ENCODE measurements at regions of chr5 and their contacts with region 1.

Region 1: DNA sequence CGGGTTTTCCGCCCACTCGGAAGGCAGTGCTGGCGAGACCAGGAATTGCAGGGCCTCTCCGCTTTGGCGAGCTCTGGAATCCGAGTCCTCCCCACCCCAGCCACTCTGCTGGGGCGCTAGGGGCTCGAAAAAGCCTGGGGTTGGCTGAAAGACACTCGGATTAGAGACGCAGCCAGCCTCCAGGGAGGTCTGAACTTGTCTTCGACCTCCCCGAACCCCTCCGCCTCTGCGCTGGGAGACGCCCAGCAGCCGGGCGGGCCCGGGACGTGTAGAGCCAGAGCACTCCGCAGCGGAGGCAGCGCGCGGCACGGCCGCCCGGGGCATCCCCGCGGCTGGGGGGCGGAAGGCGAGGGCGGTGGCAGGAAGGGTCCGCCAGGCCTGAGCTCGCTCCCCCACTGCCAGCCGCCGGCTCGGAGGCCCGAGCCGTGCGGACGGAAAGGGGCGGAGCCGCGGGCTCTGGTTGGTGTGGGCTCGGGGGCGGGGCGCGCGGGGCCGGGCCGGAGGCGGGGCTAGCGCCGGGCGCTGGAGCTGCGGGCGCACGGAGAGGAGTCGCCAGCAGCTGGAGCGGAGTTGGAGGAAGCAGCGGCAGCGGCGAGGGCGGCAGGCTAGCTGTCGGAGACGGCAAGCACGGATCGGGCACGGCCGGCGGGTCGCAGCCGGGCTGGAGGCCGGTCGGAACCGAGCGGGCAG is at the start of gene PIK3R1:
- DNase-seq: peak; percentile 97
- H3K4me3 ChIP-seq: peak within 1 kb of the TSS; percentile 90 to 98 (median 92)
- H3K27ac ChIP-seq: peak within 1 kb of the TSS; percentile 94 to 99 (median 96)
- H3K4me1 ChIP-seq: peaks cover 0 to 31% (median 27%) of the 10 kb centered on the region in 4 donors
- H3K27me3 ChIP-seq: no peaks in the 10 kb centered on the region
- CTCF ChIP-seq: peak in 3 of 4 experiments; percentile 50 to 60 (median 51)
- EP300 ChIP-seq: no peak
- POLR2A ChIP-seq: peak; percentile 56 to 59
- total RNA-seq, gene PIK3R1: 177 to 227 (median 190) TPM

Region 2: DNA sequence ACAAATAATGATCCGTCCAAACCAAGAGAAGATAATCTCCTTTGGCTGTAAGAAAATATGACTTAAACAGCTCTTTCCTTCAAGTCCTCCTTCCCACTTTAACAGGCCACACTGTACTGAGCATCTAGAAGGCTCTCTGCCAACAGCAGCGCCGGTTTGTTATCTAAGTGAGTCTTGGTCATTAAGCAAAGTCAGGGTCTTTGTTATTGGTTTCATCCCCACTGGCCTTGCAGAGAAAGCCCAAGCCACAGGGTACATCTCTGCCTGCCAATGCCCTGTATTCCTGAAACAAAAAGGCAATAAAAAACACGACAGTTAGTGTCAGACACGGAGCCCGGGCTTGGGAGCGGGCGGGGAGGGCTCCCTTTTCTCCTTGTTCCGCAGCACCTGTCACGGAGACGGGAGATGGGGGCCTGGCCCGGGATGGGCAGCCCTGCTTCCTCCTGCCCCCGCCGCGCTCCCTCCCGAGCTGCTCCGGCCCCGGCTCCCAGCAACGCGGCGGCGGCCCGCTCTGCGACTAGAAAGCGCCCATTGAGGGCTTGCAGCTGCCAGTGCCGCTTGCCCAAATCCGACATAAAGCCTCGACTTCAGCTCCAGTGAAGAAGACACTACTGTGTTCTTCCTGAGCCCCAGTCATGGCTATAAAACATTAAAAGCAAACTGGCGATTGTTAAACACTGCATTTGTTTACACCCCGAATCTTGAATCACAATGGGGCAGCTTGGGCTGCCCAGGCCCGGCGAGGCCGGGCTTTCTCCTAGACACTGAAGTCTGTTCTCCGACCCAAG is 27.9 kb before region 1 on chr5:
- intact Hi-C with region 1: loop called (anchors 2 kb)
- DNase-seq: peak; percentile 85
- H3K4me3 ChIP-seq: peak overlapping the region; percentile 5 to 39 (median 38)
- H3K27ac ChIP-seq: peak overlapping the region; percentile 75 to 84 (median 82)
- H3K4me1 ChIP-seq: peaks cover 0 to 15% (median 14%) of the 10 kb centered on the region in 4 donors
- H3K27me3 ChIP-seq: no peaks in the 10 kb centered on the region
- CTCF ChIP-seq: no peak
- EP300 ChIP-seq: no peak
- POLR2A ChIP-seq: no peak

Region 3: DNA sequence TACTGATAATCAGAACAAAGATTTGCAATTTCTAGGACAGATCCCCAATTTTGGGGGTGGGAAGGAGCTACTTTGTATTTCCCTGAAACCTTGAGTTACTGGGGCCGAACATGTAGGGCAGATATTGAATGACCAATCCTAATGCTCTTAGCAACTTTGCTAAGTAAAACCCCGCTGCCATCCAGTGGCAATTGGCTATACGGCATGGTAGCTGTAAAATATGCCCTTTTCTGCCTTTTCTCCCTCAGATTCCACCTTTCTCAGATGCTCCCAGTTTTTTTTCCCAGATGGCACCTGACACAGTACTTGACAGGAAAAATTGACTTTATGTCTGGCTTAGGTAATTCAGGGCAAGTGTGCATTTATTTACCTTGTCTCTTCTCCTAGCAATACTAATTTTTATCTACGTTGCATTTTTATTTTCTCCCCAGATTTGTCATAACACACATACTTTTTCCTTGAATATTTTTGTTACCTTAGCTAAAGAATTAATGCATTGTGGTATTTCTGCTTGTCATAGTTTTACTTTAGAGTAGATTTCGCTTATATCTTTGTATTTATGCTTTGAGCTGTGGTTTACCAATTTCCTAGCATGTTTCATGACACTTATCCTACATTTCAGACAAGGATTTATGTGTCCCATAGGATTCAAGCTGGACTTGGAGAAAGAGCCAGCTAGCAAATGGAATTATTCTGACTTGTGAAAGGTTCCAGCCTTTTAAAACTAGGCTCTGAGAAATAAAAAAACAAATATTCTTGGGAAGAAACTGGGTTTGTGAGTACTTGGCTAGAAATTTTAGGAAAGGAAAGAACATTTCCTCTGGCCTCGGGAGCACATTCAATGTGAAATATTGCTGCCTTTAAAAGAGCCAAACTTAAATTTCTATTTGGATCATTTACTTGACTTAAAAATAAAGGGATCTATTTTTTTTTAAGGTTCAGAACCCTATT is 37.6 kb after region 1 on chr5:
- intact Hi-C with region 1: loop called (anchors 5 kb)
- DNase-seq: peak; percentile 82
- H3K4me3 ChIP-seq: peak overlapping the region in 3 of 4 donors; percentile 26 to 33 (median 26)
- H3K27ac ChIP-seq: peak overlapping the region; percentile 67 to 83 (median 80)
- H3K4me1 ChIP-seq: peaks cover 0 to 100% (median 99%) of the 10 kb centered on the region in 4 donors
- H3K27me3 ChIP-seq: no peaks in the 10 kb centered on the region
- CTCF ChIP-seq: peak in 3 of 4 experiments; percentile 64 to 73 (median 73)
- EP300 ChIP-seq: peak in 1 of 4 donors; percentile 4
- POLR2A ChIP-seq: no peak

Region 4: GRCh38 chr5:68268101-68268851 is 52.9 kb after region 1 on chr5:
- intact Hi-C with region 1: loop called (anchors 5 kb)
- DNase-seq: no peak
- H3K4me3 ChIP-seq: no peak overlapping the region
- H3K27ac ChIP-seq: peak overlapping the region; percentile 75 to 89 (median 83)
- H3K4me1 ChIP-seq: peaks cover 0 to 100% (median 94%) of the 10 kb centered on the region in 4 donors
- H3K27me3 ChIP-seq: no peaks in the 10 kb centered on the region
- CTCF ChIP-seq: no peak
- EP300 ChIP-seq: no peak
- POLR2A ChIP-seq: no peak

Measured in sigmoid colon (tissue), 7 donors.